B cell (primary cell): ENCODE measurements at regions of chr4 and their contacts with region 1.

Region 1: GRCh38 chr4:75844151-75844662 is 58.0 kb downstream of the PPEF2 start:
- DNase-seq: no peak
- ATAC-seq: no peak
- H3K4me3 ChIP-seq: no peak overlapping the region
- H3K4me3 Mint-ChIP-seq: no peak overlapping the region
- H3K27ac ChIP-seq: no peak overlapping the region
- H3K27ac Mint-ChIP-seq: no peak overlapping the region
- H3K4me1 ChIP-seq: no peaks in the 10 kb centered on the region
- H3K4me1 Mint-ChIP-seq: peaks cover 6% of the 10 kb centered on the region
- H3K27me3 ChIP-seq: peaks cover 0 to 3% (median 0%) of the 10 kb centered on the region in 4 experiments
- H3K27me3 Mint-ChIP-seq: peaks cover 3% of the 10 kb centered on the region
- CTCF ChIP-seq: no peak

Region 2: GRCh38 chr4:75831856-75832405 is 12.3 kb before region 1 on chr4:
- CTCF ChIA-PET with region 1: interaction called, 11 read pairs
- POLR2A ChIA-PET with region 1: no interaction called
- intact Hi-C with region 1: no loop called
- DNase-seq: no peak
- ATAC-seq: no peak
- H3K4me3 ChIP-seq: no peak overlapping the region
- H3K4me3 Mint-ChIP-seq: no peak overlapping the region
- H3K27ac ChIP-seq: no peak overlapping the region
- H3K27ac Mint-ChIP-seq: no peak overlapping the region
- H3K4me1 ChIP-seq: no peaks in the 10 kb centered on the region
- H3K4me1 Mint-ChIP-seq: peaks cover 3% of the 10 kb centered on the region
- H3K27me3 ChIP-seq: peaks cover 0 to 8% (median 0%) of the 10 kb centered on the region in 4 experiments
- H3K27me3 Mint-ChIP-seq: peaks cover 19% of the 10 kb centered on the region
- CTCF ChIP-seq: no peak